Heart left ventricle (tissue), 16 donors: ENCODE measurements at regions of chr9 and their contacts with region 1.

Region 1: GRCh38 chr9:7234143-7234542 is 476.4 kb downstream of the KDM4C start:
- DNase-seq: no peak
- ATAC-seq: no peak
- H3K4me3 ChIP-seq: no peak overlapping the region
- H3K27ac ChIP-seq: no peak overlapping the region
- H3K4me1 ChIP-seq: no peaks in the 10 kb centered on the region
- H3K27me3 ChIP-seq: peaks cover 0 to 6% (median 0%) of the 10 kb centered on the region in 9 donors
- CTCF ChIP-seq: peak in 9 of 12 donors; percentile 20 to 52 (median 35)
- POLR2A ChIP-seq: no peak

Region 2: DNA sequence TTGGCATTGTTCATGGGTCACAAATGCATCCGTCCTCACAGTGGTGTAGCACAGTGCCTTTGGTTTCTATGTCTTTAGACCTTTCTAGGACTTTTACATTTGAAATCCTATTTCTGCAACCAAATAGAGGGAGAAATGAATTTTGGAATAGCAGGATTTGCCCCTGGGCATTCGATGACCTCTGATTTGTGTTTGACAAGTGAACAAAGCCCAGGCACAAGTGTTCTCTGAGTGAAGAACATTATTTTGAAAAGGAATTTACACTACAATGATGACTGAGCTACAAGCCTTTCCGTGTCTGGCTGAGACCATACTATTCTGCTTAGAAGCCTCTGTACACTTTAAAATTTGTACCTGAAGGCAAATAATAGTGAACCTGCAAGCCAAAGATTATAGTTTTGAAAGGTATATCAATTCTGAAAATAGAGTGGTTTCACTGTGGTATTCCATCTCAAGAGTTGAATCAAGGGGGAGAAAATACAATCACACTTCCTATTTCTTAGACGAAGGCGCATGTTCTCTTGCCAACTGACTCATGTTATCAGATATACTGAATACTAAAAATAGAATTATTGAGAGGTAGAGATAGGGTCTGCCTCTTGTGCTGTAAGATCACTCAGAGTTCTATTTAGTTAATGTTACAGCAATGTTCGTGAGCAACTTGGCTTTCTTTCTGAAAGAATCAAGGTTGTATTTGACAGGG is 178.8 kb before region 1 on chr9:
- intact Hi-C with region 1: loop called in 1 of 10 experiments (anchors 10 kb)
- DNase-seq: no peak
- ATAC-seq: no peak
- H3K4me3 ChIP-seq: no peak overlapping the region
- H3K27ac ChIP-seq: no peak overlapping the region
- H3K4me1 ChIP-seq: peaks cover 0 to 8% (median 0%) of the 10 kb centered on the region in 12 donors
- H3K27me3 ChIP-seq: no peaks in the 10 kb centered on the region
- CTCF ChIP-seq: no peak
- POLR2A ChIP-seq: no peak

Region 3: GRCh38 chr9:8419596-8420275 is 1185.6 kb after region 1 on chr9:
- intact Hi-C with region 1: loop called in 1 of 10 experiments (anchors 5 kb)
- DNase-seq: no peak
- ATAC-seq: no peak
- H3K4me3 ChIP-seq: no peak overlapping the region
- H3K27ac ChIP-seq: no peak overlapping the region
- H3K4me1 ChIP-seq: no peaks in the 10 kb centered on the region
- H3K27me3 ChIP-seq: no peaks in the 10 kb centered on the region
- CTCF ChIP-seq: no peak
- POLR2A ChIP-seq: no peak